ENCODE measurements at regions of chr7 and their contacts with region 1.

Region 1: DNA sequence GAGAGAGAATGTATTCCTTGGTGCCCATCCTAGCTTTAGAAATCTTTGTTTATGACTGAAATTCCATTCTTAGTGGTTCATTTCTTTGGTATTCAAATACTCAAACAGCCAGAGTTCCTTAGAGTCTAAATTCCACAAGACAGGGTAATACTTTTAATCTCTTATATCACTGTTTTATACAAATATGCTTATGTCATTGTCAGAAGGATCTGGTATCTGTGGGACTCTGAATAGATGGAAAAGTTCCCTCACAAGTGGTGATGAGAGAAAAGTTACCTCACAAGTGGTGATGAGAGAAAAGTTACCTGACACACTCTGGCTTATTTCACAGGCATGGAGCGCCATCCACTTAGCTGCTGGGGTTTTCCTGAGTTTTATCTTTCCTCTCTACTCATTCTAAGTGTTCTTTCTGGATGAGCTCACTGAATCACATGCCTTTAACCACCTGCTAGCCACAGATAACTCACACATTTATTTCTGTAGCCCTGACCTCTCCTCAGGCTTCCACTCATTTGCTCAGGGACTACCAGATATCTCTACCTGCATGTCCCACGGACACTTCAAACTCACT is 784.0 kb downstream of the SUGCT start:
- DNase-seq: peak; percentile 55 to 91
- H3K4me3 ChIP-seq: no peak overlapping the region
- H3K27ac ChIP-seq: peak overlapping the region; percentile 85
- H3K4me1 ChIP-seq: peaks cover 69% of the 10 kb centered on the region
- H3K27me3 ChIP-seq: no peaks in the 10 kb centered on the region
- CTCF ChIP-seq: no peak

Region 2: GRCh38 chr7:40329601-40330153 is 589.1 kb before region 1 on chr7:
- CTCF ChIA-PET with region 1: no interaction called
- POLR2A ChIA-PET with region 1: no interaction called
- intact Hi-C with region 1: loop called (anchors 5 kb)
- DNase-seq: peak; percentile 9 to 52
- H3K4me3 ChIP-seq: no peak overlapping the region
- H3K27ac ChIP-seq: no peak overlapping the region
- H3K4me1 ChIP-seq: no peaks in the 10 kb centered on the region; the same call in 1 of the 2 replicates
- H3K27me3 ChIP-seq: no peaks in the 10 kb centered on the region
- CTCF ChIP-seq: peak; percentile 98

Region 3: DNA sequence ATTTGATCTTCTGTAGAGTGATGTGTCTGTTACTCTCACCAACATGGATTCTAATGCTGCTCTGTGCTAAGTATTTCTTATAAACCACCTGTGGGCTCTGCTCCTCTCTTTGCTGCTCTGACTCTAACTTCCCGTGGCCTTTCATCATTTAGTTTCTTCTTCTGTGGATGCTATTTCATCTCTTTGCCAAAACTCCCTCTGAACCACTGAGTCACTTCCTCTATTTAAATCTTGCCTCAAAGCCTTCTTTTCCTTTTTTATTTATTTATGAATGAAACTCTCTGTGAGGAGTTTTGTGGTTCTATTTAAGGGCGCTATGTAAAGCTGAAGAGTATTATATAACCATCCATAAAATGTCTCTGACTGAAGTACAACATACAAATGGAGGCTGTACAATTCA is 245.5 kb before region 1 on chr7:
- CTCF ChIA-PET with region 1: no interaction called
- POLR2A ChIA-PET with region 1: no interaction called
- intact Hi-C with region 1: no loop called
- DNase-seq: no peak
- H3K4me3 ChIP-seq: no peak overlapping the region
- H3K27ac ChIP-seq: no peak overlapping the region
- H3K4me1 ChIP-seq: no peaks in the 10 kb centered on the region
- H3K27me3 ChIP-seq: no peaks in the 10 kb centered on the region
- CTCF ChIP-seq: no peak

Region 4: GRCh38 chr7:40733578-40733977 is 185.2 kb before region 1 on chr7:
- CTCF ChIA-PET with region 1: no interaction called
- POLR2A ChIA-PET with region 1: no interaction called
- intact Hi-C with region 1: loop called (anchors 1 kb)
- DNase-seq: peak; percentile 40 to 92
- H3K4me3 ChIP-seq: no peak overlapping the region
- H3K27ac ChIP-seq: peak overlapping the region; percentile 36
- H3K4me1 ChIP-seq: peaks cover 26% of the 10 kb centered on the region
- H3K27me3 ChIP-seq: no peaks in the 10 kb centered on the region
- CTCF ChIP-seq: no peak

Region 5: DNA sequence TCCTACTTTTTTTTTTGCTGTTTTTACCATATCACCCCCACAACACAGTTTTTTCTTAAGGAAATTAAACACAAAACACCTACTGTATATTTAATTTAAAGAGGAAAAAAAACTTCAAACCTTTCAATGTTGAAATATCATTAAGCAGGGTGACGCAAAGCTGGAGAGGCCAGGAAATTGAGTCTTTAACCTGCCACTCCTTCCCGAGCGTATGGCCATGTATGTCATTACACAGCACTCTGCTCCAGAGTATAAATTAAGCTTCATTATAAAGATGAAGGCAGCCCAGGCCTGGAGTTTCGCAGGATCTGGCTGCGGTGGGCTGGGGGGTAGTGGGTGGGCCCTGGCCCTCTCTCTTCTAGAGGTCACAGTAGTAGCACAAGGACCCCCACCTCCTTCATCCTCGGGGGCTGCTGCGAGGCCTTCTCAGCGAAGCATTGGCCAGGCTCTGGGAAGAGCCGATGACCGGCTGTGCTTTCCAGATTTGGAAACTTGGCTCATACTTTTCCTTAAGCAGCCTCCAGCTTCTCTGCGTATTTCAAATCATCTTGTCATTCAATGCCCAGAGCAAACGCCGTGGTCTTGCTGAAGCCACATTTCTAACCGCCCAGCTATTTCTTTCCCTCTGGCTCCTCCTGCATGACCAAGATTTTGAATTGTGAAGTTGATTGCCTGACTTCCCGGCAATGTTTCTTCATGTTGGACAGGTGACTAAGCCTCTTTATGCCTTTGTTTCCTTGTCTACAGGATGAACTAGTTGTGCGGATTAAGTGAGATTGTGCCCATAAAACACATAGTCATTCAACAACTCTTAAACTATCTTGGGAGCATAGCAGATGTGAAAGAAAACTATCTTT is 18.9 kb before region 1 on chr7:
- CTCF ChIA-PET with region 1: interaction called, 4 read pairs
- POLR2A ChIA-PET with region 1: interaction called, 15 read pairs
- intact Hi-C with region 1: loop called (anchors 1 kb)
- DNase-seq: peak; percentile 48 to 89
- H3K4me3 ChIP-seq: peak overlapping the region; percentile 51
- H3K27ac ChIP-seq: peak overlapping the region; percentile 94
- H3K4me1 ChIP-seq: peaks cover 25% of the 10 kb centered on the region
- H3K27me3 ChIP-seq: no peaks in the 10 kb centered on the region
- CTCF ChIP-seq: no peak

Region 6: GRCh38 chr7:41003031-41003925 is 84.5 kb after region 1 on chr7:
- CTCF ChIA-PET with region 1: interaction called, 12 read pairs
- POLR2A ChIA-PET with region 1: interaction called, 7 read pairs
- intact Hi-C with region 1: loop called (anchors 1 kb)
- DNase-seq: peak; percentile 59 to 90
- H3K4me3 ChIP-seq: no peak overlapping the region
- H3K27ac ChIP-seq: peak overlapping the region; percentile 10
- H3K4me1 ChIP-seq: peaks cover 54% of the 10 kb centered on the region
- H3K27me3 ChIP-seq: no peaks in the 10 kb centered on the region
- CTCF ChIP-seq: peak; percentile 95

Region 7: GRCh38 chr7:41107668-41108448 is 189.1 kb after region 1 on chr7:
- CTCF ChIA-PET with region 1: interaction called, 4 read pairs
- POLR2A ChIA-PET with region 1: interaction called, 3 read pairs
- intact Hi-C with region 1: loop called (anchors 5 kb)
- DNase-seq: peak; percentile 92 to 100
- H3K4me3 ChIP-seq: peak overlapping the region; percentile 45; the same call in 1 of the 2 replicates
- H3K27ac ChIP-seq: peak overlapping the region; percentile 93
- H3K4me1 ChIP-seq: peaks cover 64% of the 10 kb centered on the region
- H3K27me3 ChIP-seq: no peaks in the 10 kb centered on the region
- CTCF ChIP-seq: no peak

Region 8: DNA sequence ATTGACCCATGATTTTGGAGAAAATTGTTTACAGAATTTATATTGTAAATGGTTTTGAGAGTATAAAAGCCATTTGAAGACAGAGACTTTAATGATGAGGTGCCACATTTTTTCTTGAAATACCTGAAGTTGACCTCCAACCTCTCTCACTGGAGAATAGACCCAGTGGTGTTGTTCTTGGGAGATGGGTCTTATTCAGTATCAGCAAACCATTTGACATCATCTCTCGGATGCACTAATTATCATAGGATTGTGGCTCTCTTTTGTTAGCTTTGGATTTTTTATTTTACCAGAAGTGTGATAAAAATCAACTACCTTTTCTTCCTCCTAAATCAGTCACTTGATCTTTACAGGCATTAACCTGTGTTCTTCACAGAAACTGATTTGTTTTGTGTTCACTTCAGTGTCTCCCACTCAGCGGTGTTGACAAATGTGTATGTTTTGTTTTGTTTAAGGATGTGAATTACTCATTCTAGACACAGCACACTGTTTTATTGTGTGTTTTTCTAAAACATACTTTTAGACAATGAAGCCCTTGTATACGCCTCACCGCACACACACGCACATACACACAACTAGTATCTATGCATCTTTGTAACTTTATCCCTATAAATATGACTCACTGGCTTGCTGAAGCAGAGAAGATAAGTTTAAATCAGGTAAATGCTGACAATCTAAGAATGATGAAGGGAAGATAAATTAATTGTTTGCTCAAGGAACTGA is 328.5 kb after region 1 on chr7:
- CTCF ChIA-PET with region 1: no interaction called
- POLR2A ChIA-PET with region 1: interaction called, 3 read pairs
- intact Hi-C with region 1: loop called (anchors 5 kb)
- DNase-seq: peak; percentile 60 to 99
- H3K4me3 ChIP-seq: no peak overlapping the region
- H3K27ac ChIP-seq: peak overlapping the region; percentile 70
- H3K4me1 ChIP-seq: peaks cover 32% of the 10 kb centered on the region
- H3K27me3 ChIP-seq: no peaks in the 10 kb centered on the region
- CTCF ChIP-seq: no peak